ENCODE measurements at regions of chrX and their contacts with region 1.

Region 1: GRCh38 chrX:65034668-65035445 is 58.6 kb upstream of the ZC4H2 start:
- DNase-seq: peak; percentile 56
- ATAC-seq: peak; percentile 97
- H3K4me3 ChIP-seq: peak within 1 kb of the TSS; percentile 62 to 78 (median 76)
- H3K27ac ChIP-seq: peak within 1 kb of the TSS; percentile 77
- H3K4me1 ChIP-seq: peaks cover 13% of the 10 kb centered on the region
- H3K27me3 ChIP-seq: no peaks in the 10 kb centered on the region; a peak in 1 of 5 replicates
- CTCF ChIP-seq: peak; percentile 79
- EP300 ChIP-seq: no peak
- POLR2A ChIP-seq: peak; percentile 45 to 60
- RAD21 ChIP-seq: peak; percentile 72

Region 2: DNA sequence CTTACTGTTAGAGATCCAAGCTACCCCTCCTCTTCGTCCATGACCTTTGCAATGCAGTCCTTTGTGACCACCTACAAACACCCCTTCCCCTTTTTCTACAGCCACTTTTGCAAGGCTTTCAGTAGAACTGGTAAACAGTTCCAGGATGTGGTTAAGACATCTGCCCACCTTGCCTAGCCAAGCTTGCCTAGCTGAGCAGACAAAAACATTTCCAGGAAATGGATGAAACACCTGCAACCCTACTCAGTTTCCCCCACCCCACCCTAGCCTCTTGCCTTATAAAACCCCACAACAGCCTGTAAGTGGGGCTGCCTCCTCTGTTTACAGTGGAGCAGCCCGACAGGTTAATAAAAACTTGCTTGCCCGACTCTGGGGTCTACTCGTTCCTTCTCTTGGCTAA is 192.4 kb before region 1 on chrX:
- CTCF ChIA-PET with region 1: no interaction called
- POLR2A ChIA-PET with region 1: no interaction called
- in situ Hi-C with region 1: no loop called
- intact Hi-C with region 1: no loop called
- DNase-seq: no peak
- ATAC-seq: no peak
- H3K4me3 ChIP-seq: no peak overlapping the region
- H3K27ac ChIP-seq: no peak overlapping the region
- H3K4me1 ChIP-seq: no peaks in the 10 kb centered on the region
- H3K27me3 ChIP-seq: no peaks in the 10 kb centered on the region
- CTCF ChIP-seq: no peak
- EP300 ChIP-seq: no peak
- POLR2A ChIP-seq: no peak
- RAD21 ChIP-seq: no peak

Region 3: DNA sequence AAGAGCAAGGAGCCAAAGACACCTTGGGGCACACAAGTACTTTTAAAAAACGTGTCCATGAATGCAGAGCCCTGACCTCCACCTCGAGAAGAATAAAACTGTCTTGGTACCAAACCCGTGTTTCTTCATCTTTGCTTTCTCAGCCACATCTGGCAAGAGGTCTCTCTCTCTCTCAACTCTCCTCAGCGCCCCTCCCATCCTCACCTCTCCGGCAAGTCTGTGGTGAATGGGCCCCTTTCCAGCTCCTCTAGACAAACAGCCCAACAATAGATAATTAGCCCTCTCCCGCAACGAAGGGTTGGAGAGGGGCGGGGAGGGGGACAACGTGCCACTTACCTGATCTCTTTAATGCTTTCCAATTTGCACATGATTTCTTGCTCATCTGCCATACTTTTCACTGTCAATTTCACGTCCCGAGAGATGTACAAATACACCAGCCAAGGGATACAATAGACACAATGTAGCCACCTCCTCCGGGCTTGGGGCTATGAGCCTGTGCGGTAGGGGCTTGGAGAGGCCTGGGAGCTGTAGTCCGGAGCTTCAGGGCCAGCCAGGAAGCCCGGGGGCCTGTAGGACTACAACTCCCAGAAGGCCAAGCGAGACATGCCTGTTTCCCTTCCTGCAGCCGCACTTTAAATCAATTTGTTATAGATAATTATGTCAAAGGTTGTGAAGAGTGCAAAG is 58.7 kb before region 1 on chrX and contains the start of gene ZC4H2:
- CTCF ChIA-PET with region 1: no interaction called
- POLR2A ChIA-PET with region 1: no interaction called
- in situ Hi-C with region 1: no loop called
- intact Hi-C with region 1: no loop called
- DNase-seq: peak; percentile 73
- ATAC-seq: peak; percentile 100
- H3K4me3 ChIP-seq: peak within 1 kb of the TSS; percentile 54 to 80 (median 78)
- H3K27ac ChIP-seq: peak within 1 kb of the TSS; percentile 38
- H3K4me1 ChIP-seq: peaks cover 11% of the 10 kb centered on the region
- H3K27me3 ChIP-seq: no peaks in the 10 kb centered on the region
- CTCF ChIP-seq: no peak
- EP300 ChIP-seq: no peak
- POLR2A ChIP-seq: no peak; a peak in 1 of 4 replicates
- RAD21 ChIP-seq: no peak
- total RNA-seq, gene ZC4H2: 6.1 and 9.3 TPM in 2 replicates

Region 4: DNA sequence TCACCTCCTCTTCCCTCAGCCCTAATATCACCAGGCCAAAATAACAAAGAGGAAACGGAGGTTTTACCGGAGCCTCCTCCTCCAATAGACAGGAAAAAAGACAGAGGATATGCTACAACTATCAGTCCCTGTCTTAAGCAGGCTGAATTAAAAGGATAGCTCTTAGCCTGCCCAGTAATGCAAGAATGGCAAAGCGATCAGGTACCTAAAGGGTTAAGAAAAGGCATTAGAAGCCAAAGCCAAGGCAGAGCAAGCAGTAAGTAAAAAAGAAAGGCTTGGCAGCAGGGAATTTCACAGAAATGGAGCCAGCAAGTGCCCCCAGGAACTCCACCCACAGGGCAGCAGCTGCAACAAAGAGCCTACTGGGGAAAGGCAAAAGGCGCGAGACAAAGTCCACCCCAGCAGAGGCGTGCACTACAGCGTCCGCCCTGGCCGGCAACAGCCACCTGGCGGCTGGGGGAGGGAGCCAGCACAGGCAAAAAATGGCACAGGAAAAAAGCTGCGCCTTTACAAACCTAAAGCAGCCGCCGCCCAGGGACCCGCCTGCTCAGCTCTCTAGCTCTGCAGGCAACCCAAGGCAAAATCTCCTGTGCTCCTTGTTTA is 162.0 kb after region 1 on chrX:
- CTCF ChIA-PET with region 1: no interaction called
- POLR2A ChIA-PET with region 1: interaction called, 17 read pairs
- in situ Hi-C with region 1: no loop called
- intact Hi-C with region 1: loop called (anchors 1 kb)
- DNase-seq: peak; percentile 79
- ATAC-seq: peak; percentile 98
- H3K4me3 ChIP-seq: peak overlapping the region; percentile 43 to 68 (median 63)
- H3K27ac ChIP-seq: peak overlapping the region; percentile 86
- H3K4me1 ChIP-seq: peaks cover 18% of the 10 kb centered on the region
- H3K27me3 ChIP-seq: no peaks in the 10 kb centered on the region
- CTCF ChIP-seq: peak; percentile 76
- EP300 ChIP-seq: peak in 1 of 2 experiments; percentile 22; a peak in 1 of 4 replicates
- POLR2A ChIP-seq: peak in 1 of 2 experiments; percentile 29; a peak in 1 of 4 replicates
- RAD21 ChIP-seq: peak; percentile 81

Region 5: GRCh38 chrX:65451663-65452062 is 416.8 kb after region 1 on chrX:
- CTCF ChIA-PET with region 1: no interaction called
- POLR2A ChIA-PET with region 1: no interaction called
- in situ Hi-C with region 1: no loop called
- intact Hi-C with region 1: loop called (anchors 2 kb)
- DNase-seq: peak; percentile 15
- ATAC-seq: peak; percentile 47; the same call in 2 of the 3 replicates
- H3K4me3 ChIP-seq: no peak overlapping the region
- H3K27ac ChIP-seq: no peak overlapping the region
- H3K4me1 ChIP-seq: no peaks in the 10 kb centered on the region
- H3K27me3 ChIP-seq: no peaks in the 10 kb centered on the region
- CTCF ChIP-seq: peak; percentile 53
- EP300 ChIP-seq: no peak
- POLR2A ChIP-seq: no peak
- RAD21 ChIP-seq: no peak